Left ventricle myocardium inferior (tissue), 1 donor: ENCODE measurements at regions of chr1 and their contacts with region 1.

Region 1: DNA sequence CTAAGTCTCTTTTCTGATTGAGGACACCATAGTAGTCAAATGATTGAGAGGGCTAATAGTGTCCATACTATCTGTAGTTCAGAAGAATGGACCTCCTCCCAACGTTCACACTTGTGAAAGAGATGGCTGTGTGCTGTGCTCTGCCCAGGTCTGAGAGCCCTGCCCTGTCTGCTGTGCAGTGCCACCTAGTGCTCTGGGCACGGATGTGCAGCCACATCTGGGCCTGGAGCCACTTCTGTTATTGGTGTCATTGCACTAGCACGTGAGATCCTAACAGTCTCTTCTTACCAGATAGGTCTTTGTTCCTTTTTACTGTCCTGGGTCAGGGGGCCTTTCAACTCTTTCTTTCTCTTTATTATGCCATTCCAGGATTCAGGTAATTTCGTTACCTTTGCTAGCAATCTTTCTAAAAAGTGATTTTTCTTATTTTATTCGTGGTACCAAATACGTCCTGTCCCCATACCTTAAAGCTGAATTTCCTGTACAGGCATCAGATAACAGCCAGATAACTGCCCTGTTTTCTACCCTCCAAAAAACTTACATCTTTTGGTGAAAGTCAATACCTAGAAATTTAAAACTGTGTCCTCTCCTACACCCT is 21.7 kb downstream of the INTS3 start:
- DNase-seq: peak; percentile 86
- H3K4me3 ChIP-seq: no peak overlapping the region
- H3K27ac ChIP-seq: peak overlapping the region; percentile 82
- H3K4me1 ChIP-seq: peaks cover 72% of the 10 kb centered on the region
- H3K27me3 ChIP-seq: no peaks in the 10 kb centered on the region
- CTCF ChIP-seq: peak; percentile 96

Region 2: GRCh38 chr1:153677718-153678505 is 71.6 kb before region 1 on chr1:
- intact Hi-C with region 1: loop called (anchors 5 kb)
- DNase-seq: peak; percentile 49
- H3K4me3 ChIP-seq: peak overlapping the region; percentile 77
- H3K27ac ChIP-seq: peak overlapping the region; percentile 82
- H3K4me1 ChIP-seq: peaks cover 36% of the 10 kb centered on the region
- H3K27me3 ChIP-seq: peaks cover 21% of the 10 kb centered on the region
- CTCF ChIP-seq: peak; percentile 95

Region 3: DNA sequence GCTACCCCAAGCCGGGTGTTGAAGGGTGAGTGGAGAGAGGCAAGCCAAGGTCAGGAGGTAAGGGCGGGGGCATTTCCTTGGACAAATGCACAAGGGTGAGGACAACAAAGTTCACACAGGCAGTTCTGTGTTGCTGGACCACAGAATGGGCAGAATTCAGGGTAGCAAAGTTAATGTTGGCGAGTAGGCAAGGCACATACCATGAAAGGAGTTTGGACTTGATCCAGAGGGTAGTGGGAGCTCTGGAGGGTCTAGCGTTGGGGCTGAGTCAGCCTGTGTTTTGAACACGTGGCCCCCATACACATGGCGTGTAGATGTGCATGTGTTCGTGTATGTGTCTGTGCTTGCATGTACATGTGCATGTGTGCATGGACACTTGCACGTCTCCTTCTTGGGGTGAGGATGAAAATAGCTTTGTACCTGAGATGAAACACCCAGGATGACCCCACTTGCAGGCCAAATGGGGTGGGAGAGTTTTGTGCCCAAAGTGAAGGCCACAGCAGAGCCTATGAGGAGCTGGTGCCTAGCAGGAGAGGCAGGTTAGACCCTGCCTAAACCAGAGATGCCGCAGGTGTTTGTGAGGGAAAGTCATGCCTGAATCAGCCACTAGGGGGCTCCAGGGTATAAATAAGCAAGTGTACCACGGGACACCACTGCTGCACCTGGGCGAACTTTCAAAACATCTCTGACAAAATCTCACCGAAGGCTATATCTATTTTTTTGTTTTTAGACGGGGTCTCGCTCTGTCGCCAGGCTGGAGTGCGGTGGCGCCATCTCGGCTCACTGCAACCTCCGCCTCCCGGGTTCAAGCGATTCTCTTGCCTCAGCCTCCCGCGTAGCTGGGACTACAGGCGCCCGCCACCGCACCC is 47.5 kb after region 1 on chr1:
- intact Hi-C with region 1: no loop called
- DNase-seq: peak; percentile 67
- H3K4me3 ChIP-seq: no peak overlapping the region
- H3K27ac ChIP-seq: no peak overlapping the region
- H3K4me1 ChIP-seq: no peaks in the 10 kb centered on the region
- H3K27me3 ChIP-seq: no peaks in the 10 kb centered on the region
- CTCF ChIP-seq: peak; percentile 97

Region 4: DNA sequence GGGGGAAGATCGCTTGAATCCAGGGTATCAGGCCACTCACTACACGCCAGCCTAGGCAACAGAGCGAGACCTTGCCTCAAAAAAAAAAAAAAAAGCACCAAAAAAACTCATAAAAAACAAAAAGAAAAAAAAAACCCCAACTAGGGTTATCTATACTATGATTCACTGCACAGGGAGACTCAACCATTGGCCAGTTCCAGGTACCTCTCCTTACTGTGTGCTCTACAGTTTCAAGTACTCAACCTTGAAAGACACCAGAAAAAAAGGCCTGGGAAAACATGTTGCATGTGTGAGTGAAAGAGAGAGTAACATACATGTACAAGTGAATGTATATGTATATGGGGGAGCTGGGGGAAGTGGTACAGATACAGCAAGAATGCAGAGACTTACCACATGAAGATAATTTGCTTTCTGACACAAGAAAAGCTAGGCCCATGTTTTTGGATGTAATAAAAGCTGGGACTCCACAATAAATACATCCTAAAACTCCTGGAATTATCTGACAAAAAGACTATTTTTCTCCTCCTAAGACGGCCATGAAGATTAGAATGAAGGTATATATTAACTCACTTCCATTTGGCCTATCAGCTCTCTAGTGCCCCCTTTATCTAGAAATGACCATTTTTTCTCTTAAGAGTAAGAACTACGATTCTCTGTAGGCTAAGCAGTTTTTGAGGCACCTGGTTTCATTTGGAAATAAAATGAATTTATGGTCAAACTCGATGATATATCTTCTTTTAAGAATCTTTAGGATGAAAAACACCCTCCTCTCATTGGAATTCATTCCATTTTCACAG is 77.9 kb after region 1 on chr1:
- intact Hi-C with region 1: no loop called
- DNase-seq: no peak
- H3K4me3 ChIP-seq: no peak overlapping the region
- H3K27ac ChIP-seq: no peak overlapping the region
- H3K4me1 ChIP-seq: peaks cover 15% of the 10 kb centered on the region
- H3K27me3 ChIP-seq: no peaks in the 10 kb centered on the region
- CTCF ChIP-seq: no peak

Region 5: GRCh38 chr1:153888533-153888932 is 139.0 kb after region 1 on chr1:
- intact Hi-C with region 1: no loop called
- DNase-seq: no peak
- H3K4me3 ChIP-seq: no peak overlapping the region
- H3K27ac ChIP-seq: no peak overlapping the region
- H3K4me1 ChIP-seq: peaks cover 31% of the 10 kb centered on the region
- H3K27me3 ChIP-seq: no peaks in the 10 kb centered on the region
- CTCF ChIP-seq: no peak

Region 6: GRCh38 chr1:153936011-153936802 is 186.7 kb after region 1 on chr1:
- intact Hi-C with region 1: no loop called
- DNase-seq: no peak
- H3K4me3 ChIP-seq: no peak overlapping the region
- H3K27ac ChIP-seq: no peak overlapping the region
- H3K4me1 ChIP-seq: no peaks in the 10 kb centered on the region
- H3K27me3 ChIP-seq: no peaks in the 10 kb centered on the region
- CTCF ChIP-seq: no peak